HAP-1 (cell line): ENCODE measurements at regions of chr15 and their contacts with region 1.

Region 1: DNA sequence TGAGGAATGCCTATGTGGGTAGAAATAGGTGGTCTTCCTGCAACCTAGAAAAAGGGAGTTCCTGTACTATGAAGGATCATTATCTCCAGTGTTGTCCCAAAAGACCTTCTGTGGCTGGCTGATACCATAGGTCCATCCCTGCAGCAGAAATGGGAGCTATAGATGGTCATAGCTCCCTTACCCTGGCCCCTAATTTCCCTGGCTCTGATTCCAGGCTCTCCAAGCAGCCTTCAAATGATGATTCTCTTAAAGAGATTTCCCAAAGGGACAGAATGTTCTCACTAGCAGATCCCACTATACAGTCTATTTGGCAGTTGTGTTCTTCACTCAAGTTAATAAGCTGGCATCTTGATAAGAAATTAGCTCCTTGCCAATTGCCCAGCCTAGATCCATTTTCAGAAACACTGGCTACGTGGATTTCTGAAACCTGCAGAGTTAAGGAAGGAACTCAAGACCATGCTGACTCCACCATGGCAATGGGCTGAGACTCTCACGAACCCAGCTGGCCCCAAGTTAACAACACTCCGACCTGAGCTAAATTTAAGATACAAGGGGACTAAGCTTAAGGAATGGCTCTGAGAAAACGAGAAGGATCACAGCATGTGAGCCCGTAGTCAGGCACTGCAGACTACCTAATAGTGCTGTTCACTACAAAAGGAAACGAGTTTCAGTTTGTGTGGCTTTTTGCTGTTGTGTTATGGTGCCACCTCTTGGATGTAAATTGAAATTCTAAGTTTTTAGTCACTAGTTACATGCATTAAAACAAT is 11.4 kb downstream of the C15orf40 start:
- DNase-seq: peak; percentile 54 to 83
- H3K4me3 ChIP-seq: no peak overlapping the region
- H3K4me1 ChIP-seq: no peaks in the 10 kb centered on the region
- H3K27me3 ChIP-seq: no peaks in the 10 kb centered on the region

Region 2: DNA sequence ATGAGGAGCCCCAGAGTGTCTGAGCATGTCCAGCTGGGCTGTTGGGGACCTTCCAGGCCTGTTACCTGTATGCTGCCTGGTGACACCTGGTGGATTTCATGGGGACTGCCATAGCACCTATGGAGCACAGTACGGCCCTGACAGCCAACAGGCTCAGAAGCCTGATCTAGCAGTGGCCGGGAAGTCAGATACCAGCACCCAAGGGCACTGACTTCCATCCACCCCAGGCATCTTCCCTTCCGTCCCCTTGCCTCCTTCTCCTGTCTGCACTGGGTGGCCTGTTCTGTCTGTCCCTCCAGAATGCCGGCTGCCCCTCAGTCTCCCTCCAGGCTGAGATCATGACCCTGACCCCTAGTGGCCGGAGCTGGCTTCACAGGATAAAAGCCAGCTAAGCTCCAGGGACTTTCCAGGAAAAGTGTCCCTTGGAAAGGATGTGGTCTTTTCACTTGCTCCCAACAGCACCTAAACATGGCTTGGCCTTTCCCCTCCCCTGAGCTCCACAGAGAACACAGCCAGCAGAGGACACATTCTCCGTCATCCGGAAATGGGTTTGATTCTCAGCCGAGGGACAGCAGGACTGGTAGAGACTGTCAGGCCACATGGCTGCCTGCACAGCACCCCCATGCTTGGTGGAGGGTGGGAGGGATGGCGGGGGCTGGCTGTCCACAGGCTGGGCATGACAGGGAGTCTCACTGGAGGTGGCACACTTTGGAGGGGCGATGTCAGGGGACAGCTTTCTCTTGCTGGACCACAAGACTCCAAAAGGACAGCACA is 469.3 kb before region 1 on chr15:
- in situ Hi-C with region 1: loop called (anchors 10 kb)
- DNase-seq: peak; percentile 79 to 93
- H3K4me3 ChIP-seq: peak overlapping the region; percentile 4; the same call in 1 of the 2 replicates
- H3K4me1 ChIP-seq: peaks cover 5% of the 10 kb centered on the region
- H3K27me3 ChIP-seq: no peaks in the 10 kb centered on the region

Region 3: DNA sequence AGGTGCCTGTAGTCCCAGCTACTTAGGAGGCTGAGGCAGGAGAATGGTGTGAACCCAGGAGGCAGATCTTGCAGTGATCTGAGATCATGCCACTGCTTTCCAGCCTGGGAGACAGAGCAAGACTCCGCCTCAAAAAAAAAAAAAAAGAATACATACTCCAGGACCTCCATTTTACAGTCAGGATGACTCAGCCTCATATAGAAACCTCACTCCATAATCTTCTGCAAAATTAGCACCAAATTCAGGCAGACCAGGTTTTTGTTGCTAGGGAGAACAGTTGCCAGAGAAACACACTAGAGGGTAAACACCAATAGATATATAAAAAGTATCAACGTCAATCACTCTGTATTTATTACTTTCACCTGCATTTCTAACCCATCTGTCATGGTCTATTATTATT is 262.1 kb before region 1 on chr15:
- in situ Hi-C with region 1: no loop called
- DNase-seq: no peak
- H3K4me3 ChIP-seq: no peak overlapping the region
- H3K4me1 ChIP-seq: no peaks in the 10 kb centered on the region
- H3K27me3 ChIP-seq: no peaks in the 10 kb centered on the region